Activated T-helper 1 cell treated with anti-CD3 and anti-CD28 coated beads, Interleukin-12 subunit alpha, Interleukin-12 subunit beta, Interleukin-2, Interleukin-4 antibody, amounts not matched to agents 30 ng/mL and 10 ng/mL and 1 ng/mL, durations not matched to agents 14 hours and 24 hours and 36 hours (primary cell): ENCODE measurements at regions of chr4 and their contacts with region 1.

Region 1: DNA sequence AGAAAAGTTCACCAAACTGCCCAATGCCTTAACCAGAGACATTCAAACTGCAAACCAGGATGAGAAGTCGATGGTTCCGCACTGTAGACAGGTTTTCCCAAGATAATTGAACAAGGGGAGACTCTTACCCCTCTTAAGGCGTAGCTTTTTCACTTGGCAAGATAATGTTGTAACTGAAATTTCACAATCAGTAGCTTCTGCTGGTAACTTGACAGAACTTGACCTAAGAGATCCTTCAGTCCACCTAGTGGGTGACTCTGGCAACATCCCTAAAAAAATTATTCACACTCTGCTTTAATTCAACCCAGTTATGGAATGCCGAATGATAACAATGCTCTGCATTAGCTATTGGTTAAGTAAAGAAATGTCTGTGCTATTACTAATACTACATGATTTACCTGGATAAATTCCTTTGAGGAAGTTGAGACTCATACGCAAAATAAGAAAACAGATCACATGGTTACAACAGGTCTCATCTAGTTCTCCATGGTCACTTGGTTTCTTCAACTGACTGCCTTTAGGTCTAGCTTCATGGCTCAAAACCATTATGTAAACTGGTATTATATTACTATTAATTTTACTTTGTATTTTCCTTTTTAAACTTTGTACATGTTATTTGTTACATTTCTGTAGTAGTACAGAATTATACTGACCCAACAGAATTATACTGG is 9.1 kb downstream of the ELF2 start:
- DNase-seq: no peak
- H3K4me3 Mint-ChIP-seq: no peak overlapping the region
- H3K27ac Mint-ChIP-seq: no peak overlapping the region
- H3K4me1 Mint-ChIP-seq: peaks cover 23% of the 10 kb centered on the region
- H3K27me3 Mint-ChIP-seq: no peaks in the 10 kb centered on the region

Region 2: DNA sequence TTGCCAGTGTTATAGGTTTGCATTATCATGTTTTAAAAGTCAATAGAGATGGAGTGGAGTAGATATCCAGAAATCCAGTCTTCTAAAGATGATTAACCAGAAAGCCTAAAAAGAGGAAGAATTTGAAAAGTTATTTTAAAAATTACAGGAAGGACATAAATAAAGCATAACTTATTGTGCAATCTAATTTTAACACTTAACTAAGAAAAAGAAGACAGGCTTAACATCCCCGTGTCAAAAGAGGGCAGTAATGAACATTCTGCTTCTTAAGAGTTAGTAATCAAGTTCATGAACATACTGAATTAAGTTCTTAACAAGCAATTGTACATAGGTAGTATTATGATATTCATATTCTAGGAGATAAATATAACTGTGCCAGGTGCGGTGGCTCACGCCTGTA is 30.1 kb before region 1 on chr4:
- intact Hi-C with region 1: loop called (anchors 5 kb)
- DNase-seq: no peak
- H3K4me3 Mint-ChIP-seq: no peak overlapping the region
- H3K27ac Mint-ChIP-seq: no peak overlapping the region
- H3K4me1 Mint-ChIP-seq: peaks cover 11% of the 10 kb centered on the region
- H3K27me3 Mint-ChIP-seq: peaks cover 2% of the 10 kb centered on the region